ENCODE measurements at regions of chr20 and their contacts with region 1.

Region 1: DNA sequence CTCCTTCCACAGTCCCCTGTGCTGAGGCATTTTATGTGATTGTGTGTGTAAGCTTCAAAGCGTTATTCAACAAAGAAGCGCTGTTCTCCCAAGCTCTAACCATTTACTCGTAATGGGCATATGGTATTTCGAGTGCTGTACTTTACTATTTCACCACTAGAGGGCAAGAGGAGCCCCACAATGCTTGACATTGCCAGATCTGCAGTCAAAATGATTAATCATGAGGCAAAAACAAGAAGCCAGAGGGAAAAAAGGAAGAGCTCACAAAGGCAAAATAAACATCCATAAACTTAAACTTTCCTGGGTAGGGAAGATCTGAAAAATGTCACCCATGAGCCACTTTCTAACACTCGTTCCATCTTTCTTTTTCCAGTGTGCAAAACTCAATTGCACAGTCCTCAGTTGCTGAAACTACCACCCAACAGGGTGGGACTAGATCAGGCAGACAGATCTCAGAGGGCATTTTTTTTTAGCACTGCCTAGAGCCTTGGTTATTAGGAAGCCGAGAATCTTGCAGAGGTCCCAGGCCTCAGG is 215.0 kb upstream of the PLCB4 start:
- DNase-seq: no peak
- H3K4me3 ChIP-seq: peak overlapping the region in 1 of 4 donors; percentile 27
- H3K27ac ChIP-seq: peak overlapping the region; percentile 16 to 84 (median 68)
- H3K4me1 ChIP-seq: peaks cover 4 to 28% (median 4%) of the 10 kb centered on the region in 3 donors
- H3K27me3 ChIP-seq: no peaks in the 10 kb centered on the region
- CTCF ChIP-seq: peak; percentile 36 to 92 (median 84)
- POLR2A ChIP-seq: no peak

Region 2: GRCh38 chr20:9359561-9360308 is 505.9 kb after region 1 on chr20:
- intact Hi-C with region 1: loop called (anchors 10 kb)
- DNase-seq: no peak
- H3K4me3 ChIP-seq: no peak overlapping the region
- H3K27ac ChIP-seq: peak overlapping the region in 2 of 4 donors; percentile 29 to 31
- H3K4me1 ChIP-seq: peaks cover 0 to 18% (median 0%) of the 10 kb centered on the region in 3 donors
- H3K27me3 ChIP-seq: no peaks in the 10 kb centered on the region
- CTCF ChIP-seq: peak in 5 of 6 experiments; percentile 27 to 62 (median 44)
- POLR2A ChIP-seq: no peak

Measured in esophagus squamous epithelium (tissue), 5 donors.